Naive thymus-derived CD8-positive, alpha-beta T cell (primary cell): ENCODE measurements at regions of chr9 and their contacts with region 1.

Region 1: DNA sequence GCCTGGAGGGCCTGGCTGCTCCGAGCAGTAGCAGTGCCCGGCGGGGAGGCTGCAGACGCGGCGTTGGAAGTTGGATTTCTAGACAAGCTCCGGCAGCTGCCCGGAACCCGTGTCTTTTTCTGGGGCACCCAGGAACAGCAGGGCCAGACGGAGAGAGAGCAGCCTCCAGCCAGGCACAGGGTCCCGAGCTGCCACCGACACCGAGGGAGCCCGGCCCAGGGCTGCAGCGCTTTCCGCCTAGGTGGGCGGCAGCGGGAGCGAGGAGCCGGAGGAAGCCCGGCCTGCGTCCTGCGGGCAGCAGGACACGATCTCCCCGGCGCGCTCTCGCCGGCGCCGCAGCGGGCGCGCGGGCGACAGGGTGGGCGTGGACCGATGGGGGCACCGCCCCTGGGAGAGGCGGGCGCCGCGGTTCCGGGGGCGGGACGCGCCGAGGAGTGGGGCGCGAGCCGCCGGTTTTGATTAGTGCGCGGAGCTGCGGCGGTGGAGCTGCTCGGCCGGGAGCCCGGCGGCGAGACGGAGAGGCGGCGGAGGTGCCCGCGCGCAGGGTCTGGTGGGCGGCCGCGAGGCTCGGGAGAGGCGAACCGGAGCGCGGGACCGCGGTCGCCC is at the start of gene UGCG:
- DNase-seq: peak; percentile 73 to 92 (median 86)
- ATAC-seq: peak; percentile 90
- H3K4me3 Mint-ChIP-seq: peak within 1 kb of the TSS in 9 of 10 donors; percentile 91 to 99 (median 96)
- H3K27ac Mint-ChIP-seq: peak within 1 kb of the TSS; percentile 88 to 96 (median 93)
- H3K4me1 Mint-ChIP-seq: peaks cover 5 to 25% (median 13%) of the 10 kb centered on the region in 4 donors
- H3K27me3 Mint-ChIP-seq: no peaks in the 10 kb centered on the region
- polyA plus RNA-seq, gene UGCG: 5.7 to 7.8 (median 6.1) TPM

Region 2: GRCh38 chr9:111916234-111916645 is 19.8 kb after region 1 on chr9:
- POLR2A ChIA-PET with region 1: interaction called, 14 read pairs
- DNase-seq: no peak
- ATAC-seq: no peak
- H3K4me3 Mint-ChIP-seq: peak overlapping the region in 1 of 10 donors; percentile 30
- H3K27ac Mint-ChIP-seq: peak overlapping the region in 2 of 10 donors; percentile 31 to 38
- H3K4me1 Mint-ChIP-seq: peaks cover 24 to 66% (median 47%) of the 10 kb centered on the region in 4 donors
- H3K27me3 Mint-ChIP-seq: no peaks in the 10 kb centered on the region

Region 3: DNA sequence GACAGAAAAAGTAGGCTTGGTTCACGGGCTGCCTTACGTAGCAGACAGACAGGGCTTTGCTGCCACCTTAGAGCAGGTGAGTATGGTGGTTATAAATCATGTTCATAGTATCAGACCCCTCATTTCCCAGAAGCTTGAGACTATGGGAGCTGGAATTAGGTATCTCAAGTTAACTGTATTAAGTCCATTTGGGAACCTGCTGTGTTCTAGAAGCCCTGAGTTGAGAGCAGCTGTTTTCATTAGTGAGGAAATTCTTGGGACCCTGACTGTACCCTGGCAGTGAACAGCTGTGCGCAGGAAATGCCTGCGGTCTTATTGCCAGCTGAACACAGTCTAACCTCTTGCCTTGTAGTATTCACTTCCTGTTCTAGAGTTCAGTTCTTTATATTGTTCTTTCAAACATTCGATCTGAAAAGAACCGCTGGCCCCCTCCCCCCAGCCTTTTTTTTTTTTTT is 30.0 kb after region 1 on chr9:
- POLR2A ChIA-PET with region 1: interaction called, 29 read pairs
- DNase-seq: peak; percentile 22 to 84 (median 68)
- ATAC-seq: peak; percentile 98 to 99
- H3K4me3 Mint-ChIP-seq: peak overlapping the region; percentile 60 to 84 (median 72)
- H3K27ac Mint-ChIP-seq: peak overlapping the region; percentile 80 to 94 (median 86)
- H3K4me1 Mint-ChIP-seq: peaks cover 8 to 53% (median 35%) of the 10 kb centered on the region in 4 donors
- H3K27me3 Mint-ChIP-seq: no peaks in the 10 kb centered on the region

Region 4: GRCh38 chr9:112002131-112002846 is 105.8 kb after region 1 on chr9:
- POLR2A ChIA-PET with region 1: interaction called, 16 read pairs
- DNase-seq: peak in 8 of 10 donors; percentile 1 to 65 (median 28)
- ATAC-seq: peak; percentile 88 to 93
- H3K4me3 Mint-ChIP-seq: peak overlapping the region in 9 of 10 donors; percentile 22 to 72 (median 55)
- H3K27ac Mint-ChIP-seq: peak overlapping the region in 9 of 10 donors; percentile 26 to 83 (median 71)
- H3K4me1 Mint-ChIP-seq: peaks cover 14 to 38% (median 31%) of the 10 kb centered on the region in 4 donors
- H3K27me3 Mint-ChIP-seq: no peaks in the 10 kb centered on the region

Region 5: GRCh38 chr9:112028280-112029221 is 132.1 kb after region 1 on chr9:
- POLR2A ChIA-PET with region 1: no interaction called
- DNase-seq: no peak
- ATAC-seq: peak in 1 of 2 donors; percentile 41
- H3K4me3 Mint-ChIP-seq: no peak overlapping the region
- H3K27ac Mint-ChIP-seq: no peak overlapping the region
- H3K4me1 Mint-ChIP-seq: peaks cover 8 to 51% (median 11%) of the 10 kb centered on the region in 4 donors
- H3K27me3 Mint-ChIP-seq: peaks cover 5 to 39% (median 15%) of the 10 kb centered on the region in 5 donors

Region 6: DNA sequence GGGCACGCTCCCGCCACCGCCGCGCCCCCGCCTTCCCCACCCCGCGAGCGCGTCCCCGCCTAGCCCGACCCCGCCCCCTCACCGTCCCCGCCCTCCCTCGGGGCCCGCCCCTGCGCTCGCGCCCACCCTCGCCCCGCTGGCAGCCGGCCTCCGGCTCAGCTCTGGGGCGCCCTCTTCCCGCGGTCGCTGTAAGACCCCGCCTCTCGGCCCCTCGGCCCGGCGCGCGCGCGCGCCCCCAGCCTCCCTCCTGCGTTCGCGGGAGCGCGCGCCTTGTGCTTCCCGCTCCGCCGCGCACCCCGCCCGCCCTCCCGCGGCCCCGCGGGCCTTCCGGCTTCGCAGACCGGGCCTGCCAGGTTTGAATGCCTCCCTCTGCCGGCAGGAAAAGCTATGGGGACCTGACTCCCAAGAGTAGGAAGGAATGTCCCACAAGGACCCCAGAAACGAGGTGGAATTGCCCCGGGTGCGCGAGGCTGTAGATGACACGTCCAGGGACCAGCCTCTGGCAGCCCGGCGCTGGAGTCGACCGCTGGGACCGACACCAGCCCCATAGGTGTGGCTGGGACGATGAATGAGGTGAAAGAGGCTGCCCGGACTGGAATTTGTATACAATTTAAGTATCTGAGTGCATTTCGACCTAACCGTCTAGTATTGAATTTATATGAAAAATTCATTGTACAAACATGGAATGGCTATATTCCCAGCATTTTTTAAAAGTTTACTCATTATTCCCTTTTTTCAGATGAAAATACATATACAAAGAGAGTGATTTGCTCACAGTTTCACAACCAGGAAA is 437.4 kb after region 1 on chr9:
- POLR2A ChIA-PET with region 1: interaction called, 17 read pairs
- DNase-seq: peak; percentile 82 to 97 (median 90)
- ATAC-seq: peak; percentile 79 to 83
- H3K4me3 Mint-ChIP-seq: peak overlapping the region; percentile 77 to 98 (median 92)
- H3K27ac Mint-ChIP-seq: peak overlapping the region; percentile 83 to 98 (median 90)
- H3K4me1 Mint-ChIP-seq: peaks cover 14 to 43% (median 36%) of the 10 kb centered on the region in 4 donors
- H3K27me3 Mint-ChIP-seq: no peaks in the 10 kb centered on the region